Aorta (tissue), 5 donors: ENCODE measurements at regions of chr1 and their contacts with region 1.

Region 1: GRCh38 chr1:222792744-222793143 is 22.1 kb upstream of the DISP1 start:
- DNase-seq: no peak
- ATAC-seq: no peak
- H3K4me3 ChIP-seq: no peak overlapping the region
- H3K27ac ChIP-seq: no peak overlapping the region
- H3K4me1 ChIP-seq: no peaks in the 10 kb centered on the region
- H3K27me3 ChIP-seq: no peaks in the 10 kb centered on the region

Region 2: DNA sequence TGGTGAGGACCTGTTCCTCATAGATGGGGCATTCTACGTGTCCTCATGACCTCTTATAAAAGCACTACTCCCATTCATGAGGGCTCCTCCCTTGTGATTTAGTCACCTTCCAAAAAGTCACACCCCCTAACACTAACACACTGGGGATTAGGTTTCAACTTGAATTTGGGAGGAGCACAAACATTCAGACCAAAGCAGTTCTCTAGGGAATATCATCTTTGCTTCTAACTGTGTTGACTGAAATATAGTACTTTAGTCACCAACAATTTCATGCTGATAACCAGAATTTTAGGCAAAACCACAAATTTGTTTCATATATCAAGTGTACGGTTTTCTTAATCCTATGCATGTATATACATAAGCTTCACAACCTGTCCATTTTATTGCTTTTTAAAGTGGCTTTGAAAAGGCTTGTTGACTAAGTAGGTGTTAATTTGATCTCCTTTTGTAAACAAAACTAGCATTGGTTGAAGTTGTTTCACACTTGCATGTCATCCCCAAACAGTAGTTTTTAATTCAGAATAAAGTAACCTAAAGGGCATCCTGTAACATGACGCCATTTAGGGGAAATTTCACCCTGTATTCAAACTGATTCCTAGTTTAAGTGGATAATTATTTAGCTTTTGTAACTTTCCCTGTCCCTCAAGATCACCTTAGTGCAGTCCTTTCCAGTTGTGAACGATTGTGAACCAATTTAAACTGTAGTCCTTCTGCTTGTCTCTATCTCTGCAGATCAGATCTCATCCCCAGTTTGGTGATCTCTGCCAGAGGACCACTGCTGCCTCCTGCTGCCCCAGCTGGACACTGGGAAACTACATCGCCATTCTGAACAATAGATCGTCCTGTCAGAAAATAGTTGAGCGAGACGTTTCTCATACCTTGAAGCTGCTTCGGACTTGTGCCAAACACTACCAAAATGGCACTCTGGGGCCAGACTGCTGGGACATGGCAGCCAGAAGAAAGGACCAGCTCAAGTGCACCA is 209.2 kb after region 1 on chr1:
- intact Hi-C with region 1: loop called in 1 of 2 experiments (anchors 10 kb)
- DNase-seq: no peak
- ATAC-seq: no peak
- H3K4me3 ChIP-seq: no peak overlapping the region
- H3K27ac ChIP-seq: no peak overlapping the region
- H3K4me1 ChIP-seq: peaks cover 0 to 6% of the 10 kb centered on the region in 2 donors
- H3K27me3 ChIP-seq: no peaks in the 10 kb centered on the region

Region 3: GRCh38 chr1:223081181-223081994 is 288.6 kb after region 1 on chr1:
- intact Hi-C with region 1: loop called (anchors 1 to 5 kb)
- DNase-seq: peak; percentile 87 to 93
- ATAC-seq: peak; percentile 94
- H3K4me3 ChIP-seq: peak overlapping the region in 1 of 2 donors; percentile 44
- H3K27ac ChIP-seq: peak overlapping the region in 1 of 2 donors; percentile 20
- H3K4me1 ChIP-seq: no peaks in the 10 kb centered on the region
- H3K27me3 ChIP-seq: no peaks in the 10 kb centered on the region